Heart left ventricle (tissue), 16 donors: ENCODE measurements at regions of chr17 and their contacts with region 1.

Region 1: GRCh38 chr17:41777574-41778188 is 8.8 kb downstream of the JUP start:
- DNase-seq: peak; percentile 88 to 91 (median 89)
- ATAC-seq: peak; percentile 27 to 64 (median 50)
- H3K4me3 ChIP-seq: peak overlapping the region in 3 of 12 donors; percentile 5 to 22 (median 12)
- H3K27ac ChIP-seq: peak overlapping the region; percentile 83 to 97 (median 95)
- H3K4me1 ChIP-seq: peaks cover 44 to 100% (median 96%) of the 10 kb centered on the region in 12 donors
- H3K27me3 ChIP-seq: no peaks in the 10 kb centered on the region
- CTCF ChIP-seq: peak in 3 of 12 donors; percentile 8 to 13 (median 10)
- POLR2A ChIP-seq: peak in 1 of 2 donors; percentile 59

Region 2: GRCh38 chr17:41602524-41602923 is 175.2 kb before region 1 on chr17:
- intact Hi-C with region 1: no loop called
- DNase-seq: no peak
- ATAC-seq: no peak
- H3K4me3 ChIP-seq: no peak overlapping the region
- H3K27ac ChIP-seq: no peak overlapping the region
- H3K4me1 ChIP-seq: no peaks in the 10 kb centered on the region
- H3K27me3 ChIP-seq: peaks cover 0 to 14% (median 0%) of the 10 kb centered on the region in 9 donors
- CTCF ChIP-seq: no peak
- POLR2A ChIP-seq: no peak

Region 3: DNA sequence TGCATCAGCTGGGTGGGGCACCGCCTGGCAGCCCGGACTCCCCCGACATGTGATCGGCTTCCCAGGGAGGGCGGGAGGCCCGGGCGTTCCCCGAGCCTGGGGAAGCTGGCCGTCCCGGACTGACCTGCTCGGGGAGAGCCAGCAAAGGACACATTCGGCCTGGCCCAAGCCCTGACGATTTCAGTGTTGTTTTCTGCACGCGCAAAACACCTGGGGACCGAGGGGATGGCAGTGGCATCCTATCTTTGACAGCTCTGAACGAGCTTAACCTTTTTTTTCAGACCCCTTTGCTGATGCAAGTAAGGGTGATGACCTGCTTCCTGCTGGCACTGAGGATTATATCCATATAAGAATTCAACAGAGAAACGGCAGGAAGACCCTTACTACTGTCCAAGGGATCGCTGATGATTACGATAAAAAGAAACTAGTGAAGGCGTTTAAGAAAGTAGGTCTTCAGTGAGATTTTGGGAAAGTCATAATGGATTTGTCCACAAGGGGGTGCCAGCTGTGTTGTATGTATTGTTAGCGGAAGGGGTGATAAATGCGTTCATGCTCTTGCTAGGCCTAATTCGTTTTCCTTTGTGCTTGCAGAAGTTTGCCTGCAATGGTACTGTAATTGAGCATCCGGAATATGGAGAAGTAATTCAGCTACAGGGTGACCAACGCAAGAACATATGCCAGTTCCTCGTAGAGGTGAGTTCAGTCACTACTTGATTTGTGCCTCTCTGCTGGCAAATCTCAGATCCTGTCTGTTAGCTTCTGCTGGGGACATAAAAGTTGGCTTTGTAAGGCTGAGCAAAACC is 88.0 kb before region 1 on chr17:
- intact Hi-C with region 1: loop called in 2 of 10 experiments (anchors 5 to 10 kb)
- DNase-seq: peak in 1 of 5 donors; percentile 32
- ATAC-seq: no peak
- H3K4me3 ChIP-seq: peak overlapping the region; percentile 56 to 99 (median 87)
- H3K27ac ChIP-seq: peak overlapping the region; percentile 99 to 100 (median 100)
- H3K4me1 ChIP-seq: peaks cover 11 to 38% (median 32%) of the 10 kb centered on the region in 12 donors
- H3K27me3 ChIP-seq: no peaks in the 10 kb centered on the region
- CTCF ChIP-seq: peak; percentile 35 to 64 (median 55)
- POLR2A ChIP-seq: no peak

Region 4: GRCh38 chr17:41695954-41696756 is 81.5 kb before region 1 on chr17:
- intact Hi-C with region 1: loop called in 2 of 10 experiments (anchors 5 to 10 kb)
- DNase-seq: peak in 4 of 5 donors; percentile 54 to 67 (median 66)
- ATAC-seq: peak in 2 of 4 donors; percentile 1 to 12
- H3K4me3 ChIP-seq: no peak overlapping the region
- H3K27ac ChIP-seq: peak overlapping the region in 5 of 12 donors; percentile 35 to 70 (median 53)
- H3K4me1 ChIP-seq: peaks cover 3 to 44% (median 31%) of the 10 kb centered on the region in 12 donors
- H3K27me3 ChIP-seq: no peaks in the 10 kb centered on the region
- CTCF ChIP-seq: peak; percentile 71 to 91 (median 84)
- POLR2A ChIP-seq: no peak

Region 5: GRCh38 chr17:41801374-41802271 is 23.9 kb after region 1 on chr17:
- intact Hi-C with region 1: loop called in 2 of 10 experiments (anchors 2 kb)
- DNase-seq: peak; percentile 74 to 90 (median 83)
- ATAC-seq: peak; percentile 79 to 89 (median 84)
- H3K4me3 ChIP-seq: peak overlapping the region in 3 of 12 donors; percentile 24 to 34 (median 29)
- H3K27ac ChIP-seq: peak overlapping the region in 1 of 12 donors; percentile 54
- H3K4me1 ChIP-seq: peaks cover 0 to 11% (median 10%) of the 10 kb centered on the region in 12 donors
- H3K27me3 ChIP-seq: no peaks in the 10 kb centered on the region
- CTCF ChIP-seq: peak; percentile 93 to 99 (median 97)
- POLR2A ChIP-seq: no peak